MCF 10A (cell line): ENCODE measurements at regions of chr7 and their contacts with region 1.

Region 1: DNA sequence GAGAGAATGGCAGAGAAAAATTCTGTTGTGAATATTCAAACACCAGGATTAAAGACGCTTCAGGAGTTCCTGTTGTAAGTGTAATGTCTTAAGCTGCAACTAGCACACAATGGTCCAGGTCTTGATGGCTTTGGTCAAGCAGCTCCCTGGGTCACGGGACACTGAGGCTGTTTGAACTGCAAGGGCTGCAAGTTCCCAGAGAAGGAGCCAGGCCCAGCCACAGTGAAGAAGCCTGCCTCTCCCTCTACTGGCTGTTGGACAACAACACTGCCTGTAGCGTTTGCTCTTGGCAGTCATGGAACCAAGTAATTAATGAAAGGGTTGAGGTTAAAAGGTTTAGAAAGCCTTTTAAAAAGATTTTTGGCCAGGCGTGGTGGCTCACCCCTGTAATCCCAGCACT is 31.9 kb upstream of the GUSB start:
- DNase-seq: peak; percentile 60
- H3K4me3 Mint-ChIP-seq: no peak overlapping the region
- H3K27ac Mint-ChIP-seq: no peak overlapping the region
- H3K4me1 Mint-ChIP-seq: peaks cover 17% of the 10 kb centered on the region
- H3K27me3 Mint-ChIP-seq: no peaks in the 10 kb centered on the region
- CTCF ChIP-seq: peak; percentile 34

Region 2: GRCh38 chr7:65722345-65722792 is 291.5 kb before region 1 on chr7:
- CTCF ChIA-PET with region 1: no interaction called
- POLR2A ChIA-PET with region 1: no interaction called
- intact Hi-C with region 1: loop called (anchors 1 kb)
- DNase-seq: peak; percentile 56
- H3K4me3 Mint-ChIP-seq: no peak overlapping the region
- H3K27ac Mint-ChIP-seq: no peak overlapping the region
- H3K4me1 Mint-ChIP-seq: no peaks in the 10 kb centered on the region
- H3K27me3 Mint-ChIP-seq: no peaks in the 10 kb centered on the region
- CTCF ChIP-seq: peak; percentile 77

Region 3: GRCh38 chr7:65872776-65873581 is 140.9 kb before region 1 on chr7 and contains the start of gene VKORC1L1:
- CTCF ChIA-PET with region 1: no interaction called
- POLR2A ChIA-PET with region 1: no interaction called
- intact Hi-C with region 1: no loop called
- DNase-seq: peak; percentile 92
- H3K4me3 Mint-ChIP-seq: peak within 1 kb of the TSS; percentile 77
- H3K27ac Mint-ChIP-seq: peak within 1 kb of the TSS; percentile 79
- H3K4me1 Mint-ChIP-seq: peaks cover 5% of the 10 kb centered on the region
- H3K27me3 Mint-ChIP-seq: no peaks in the 10 kb centered on the region
- CTCF ChIP-seq: no peak
- total RNA-seq, gene VKORC1L1: 28.7 and 32.1 TPM in 2 replicates

Region 4: DNA sequence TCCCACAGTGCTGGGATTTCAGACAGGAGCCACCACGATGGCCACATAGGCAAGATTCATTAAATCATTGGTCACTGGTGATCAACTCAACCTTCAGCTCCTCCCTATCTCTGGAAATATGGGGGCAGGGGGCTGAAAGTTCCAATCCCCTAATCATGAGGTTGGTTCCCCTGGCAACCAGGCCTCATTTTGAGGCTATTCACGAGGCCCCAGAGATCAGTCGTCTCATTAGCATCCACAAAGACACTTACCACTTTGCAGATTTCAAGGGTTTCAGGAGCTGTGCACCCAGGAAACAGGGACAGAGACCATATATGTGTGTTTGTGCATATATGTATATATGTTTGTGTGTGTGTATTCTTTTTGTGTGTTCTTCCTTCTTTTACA is 24.2 kb before region 1 on chr7:
- CTCF ChIA-PET with region 1: no interaction called
- POLR2A ChIA-PET with region 1: no interaction called
- intact Hi-C with region 1: loop called (anchors 1 kb)
- DNase-seq: no peak
- H3K4me3 Mint-ChIP-seq: no peak overlapping the region
- H3K27ac Mint-ChIP-seq: no peak overlapping the region
- H3K4me1 Mint-ChIP-seq: peaks cover 6% of the 10 kb centered on the region
- H3K27me3 Mint-ChIP-seq: no peaks in the 10 kb centered on the region
- CTCF ChIP-seq: no peak